ENCODE measurements at regions of chr5 and their contacts with region 1.

Region 1: GRCh38 chr5:69217548-69218526 is 16.8 kb upstream of the CDK7 start:
- DNase-seq: peak; percentile 91 to 99
- H3K4me3 ChIP-seq: peak overlapping the region; percentile 84 to 86
- H3K27ac ChIP-seq: peak overlapping the region; percentile 88 to 91
- H3K4me1 ChIP-seq: peaks cover 0 to 6% of the 10 kb centered on the region in 2 donors
- H3K27me3 ChIP-seq: no peaks in the 10 kb centered on the region
- CTCF ChIP-seq: peak; percentile 23 to 26 (median 25)

Region 2: DNA sequence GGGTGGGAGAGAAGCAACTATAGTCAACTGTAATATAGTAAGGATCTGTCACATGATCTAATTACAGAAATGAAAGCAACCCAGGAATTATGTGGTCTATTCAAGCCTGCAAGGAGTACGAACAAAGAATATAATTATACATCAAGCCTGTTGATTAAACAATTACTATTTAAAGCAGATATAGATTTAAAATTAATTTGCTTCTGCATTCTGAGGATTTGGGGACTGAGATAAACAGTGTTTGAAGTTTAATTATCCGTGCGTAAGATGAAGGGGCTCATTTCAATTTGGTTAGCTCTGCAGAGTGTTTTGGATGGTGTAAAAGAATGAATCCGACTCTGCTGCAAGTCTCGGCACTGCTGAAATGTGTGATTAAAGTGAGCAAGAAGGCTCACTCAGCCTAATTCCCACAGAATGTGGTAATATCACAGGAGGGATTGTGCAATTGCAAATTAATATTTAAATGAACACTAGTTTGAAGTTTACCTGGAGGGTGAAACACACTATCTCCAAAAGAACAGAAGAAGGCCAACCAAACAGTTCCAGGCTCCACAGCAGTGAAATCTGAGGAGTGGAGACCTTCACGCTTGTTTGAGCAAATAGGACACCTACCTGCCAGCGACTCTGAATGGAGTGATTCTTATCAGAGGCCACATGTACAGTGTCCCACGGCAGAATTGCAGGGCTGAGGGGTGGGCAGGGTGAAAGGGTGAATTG is 544.6 kb before region 1 on chr5:
- intact Hi-C with region 1: no loop called
- DNase-seq: no peak
- H3K4me3 ChIP-seq: no peak overlapping the region
- H3K27ac ChIP-seq: no peak overlapping the region
- H3K4me1 ChIP-seq: no peaks in the 10 kb centered on the region
- H3K27me3 ChIP-seq: no peaks in the 10 kb centered on the region
- CTCF ChIP-seq: no peak

Region 3: GRCh38 chr5:69189162-69190086 is 28.4 kb before region 1 on chr5 and contains the start of gene CENPH:
- intact Hi-C with region 1: loop called (anchors 1 kb)
- DNase-seq: peak; percentile 52 to 93
- H3K4me3 ChIP-seq: peak within 1 kb of the TSS; percentile 82 to 85
- H3K27ac ChIP-seq: peak within 1 kb of the TSS; percentile 75
- H3K4me1 ChIP-seq: peaks cover 0 to 4% of the 10 kb centered on the region in 2 donors
- H3K27me3 ChIP-seq: no peaks in the 10 kb centered on the region
- CTCF ChIP-seq: no peak
- total RNA-seq, gene CENPH: not detected

Region 4: GRCh38 chr5:69271376-69271775 is 53.5 kb after region 1 on chr5:
- intact Hi-C with region 1: loop called (anchors 10 kb)
- DNase-seq: no peak
- H3K4me3 ChIP-seq: no peak overlapping the region
- H3K27ac ChIP-seq: no peak overlapping the region
- H3K4me1 ChIP-seq: no peaks in the 10 kb centered on the region
- H3K27me3 ChIP-seq: no peaks in the 10 kb centered on the region
- CTCF ChIP-seq: no peak